ENCODE measurements at regions of chr3 and their contacts with region 1.

Region 1: DNA sequence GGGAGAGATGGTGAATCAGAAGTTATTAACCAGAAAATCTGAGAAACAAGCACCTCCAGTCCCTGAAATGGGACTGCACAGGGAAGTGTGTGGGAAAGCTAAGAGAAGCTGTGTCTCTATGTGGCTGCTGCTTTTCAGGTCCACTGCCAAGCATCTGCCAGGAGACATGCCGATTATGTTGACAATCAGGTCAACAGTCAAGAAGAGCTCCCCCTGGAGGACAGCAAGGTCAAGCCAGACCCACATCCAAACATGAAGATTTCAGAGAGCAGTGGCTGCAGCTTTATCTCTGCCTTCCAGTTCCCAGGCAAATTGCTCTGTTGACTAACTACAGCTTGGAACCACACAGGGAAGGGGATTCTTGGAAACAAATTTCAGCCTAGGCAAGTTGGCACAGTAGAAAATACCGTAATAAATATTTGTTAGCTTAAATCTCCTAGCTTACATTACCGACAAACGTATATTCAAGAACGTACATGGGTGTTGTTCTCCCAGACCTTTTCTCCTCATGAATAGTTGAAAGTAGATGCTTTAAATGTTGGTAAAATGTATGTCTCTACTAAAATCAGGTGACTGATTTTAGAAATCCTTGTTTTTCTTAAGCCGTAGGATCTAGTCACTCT is 394.5 kb upstream of the RARB start:
- DNase-seq: peak; percentile 77

Region 2: DNA sequence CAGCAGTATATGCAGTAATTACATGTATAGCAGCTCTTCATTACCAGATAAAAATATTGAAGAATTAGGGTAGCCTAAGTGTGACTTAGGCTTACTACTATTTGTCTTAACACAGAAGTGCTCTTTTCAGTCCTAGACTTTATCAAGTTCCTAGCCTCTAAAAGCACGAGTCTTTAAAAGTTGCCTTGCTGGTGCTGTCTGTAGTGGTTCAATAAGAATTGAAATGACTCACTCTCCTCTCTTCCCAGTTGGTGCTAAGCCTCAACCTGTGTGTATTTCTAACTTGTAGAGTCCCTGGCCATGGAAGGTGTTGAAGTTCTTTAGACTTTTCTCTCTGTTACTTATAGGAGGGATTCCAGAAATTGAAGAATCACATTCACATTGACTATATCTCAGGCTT is 143.5 kb before region 1 on chr3:
- CTCF ChIA-PET with region 1: no interaction called
- POLR2A ChIA-PET with region 1: no interaction called
- DNase-seq: no peak

Region 3: DNA sequence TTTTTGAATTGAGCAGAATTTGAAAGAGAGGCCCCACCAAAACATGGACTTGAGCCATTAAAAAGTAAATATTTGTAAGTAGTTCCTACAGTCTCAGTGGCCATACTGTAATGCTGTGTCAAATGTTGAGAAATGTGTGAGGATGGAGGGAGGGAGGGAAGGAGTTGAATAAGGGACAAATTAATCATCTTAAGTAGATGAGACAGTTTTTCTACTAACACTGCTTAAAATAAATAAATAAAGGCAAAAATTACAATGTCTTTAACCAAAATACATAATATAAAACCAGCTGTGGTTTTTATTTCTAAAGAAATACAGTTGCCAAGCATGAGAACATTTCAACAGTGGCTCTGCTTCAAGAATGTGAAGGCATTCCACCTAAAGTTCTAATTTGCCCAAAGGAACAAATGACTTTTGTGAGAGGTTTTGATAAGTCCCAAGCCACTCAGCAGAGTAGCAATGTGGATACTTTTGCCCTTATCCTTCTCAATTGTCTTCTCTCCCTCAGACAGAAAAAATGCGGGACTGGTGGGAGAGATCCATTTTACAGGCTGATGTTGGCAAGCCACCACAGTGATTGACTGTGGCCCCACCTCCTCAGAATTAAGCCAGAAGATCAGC is 32.4 kb before region 1 on chr3:
- CTCF ChIA-PET with region 1: no interaction called
- POLR2A ChIA-PET with region 1: no interaction called
- DNase-seq: no peak

Region 4: GRCh38 chr3:25021816-25022215 is 11.7 kb before region 1 on chr3:
- CTCF ChIA-PET with region 1: interaction called, 37 read pairs
- POLR2A ChIA-PET with region 1: no interaction called
- DNase-seq: peak; percentile 14

Region 5: GRCh38 chr3:25178672-25179071 is 145.2 kb after region 1 on chr3:
- CTCF ChIA-PET with region 1: no interaction called
- POLR2A ChIA-PET with region 1: no interaction called
- DNase-seq: no peak

Measured in HEK293T (cell line).